ENCODE measurements at regions of chr2 and their contacts with region 1.

Region 1: GRCh38 chr2:9333591-9334171 is 89.6 kb downstream of the ITGB1BP1 start:
- DNase-seq: peak; percentile 69 to 73
- H3K4me3 ChIP-seq: no peak overlapping the region
- H3K4me3 Mint-ChIP-seq: no peak overlapping the region
- H3K27ac Mint-ChIP-seq: no peak overlapping the region
- H3K4me1 ChIP-seq: no peaks in the 10 kb centered on the region
- H3K4me1 Mint-ChIP-seq: peaks cover 26% of the 10 kb centered on the region
- H3K27me3 ChIP-seq: no peaks in the 10 kb centered on the region
- H3K27me3 Mint-ChIP-seq: no peaks in the 10 kb centered on the region
- CTCF ChIP-seq: peak; percentile 55 to 86

Region 2: GRCh38 chr2:8514796-8515758 is 818.6 kb before region 1 on chr2:
- CTCF ChIA-PET with region 1: no interaction called
- POLR2A ChIA-PET with region 1: no interaction called
- intact Hi-C with region 1: no loop called
- DNase-seq: no peak
- H3K4me3 ChIP-seq: no peak overlapping the region
- H3K4me3 Mint-ChIP-seq: peak overlapping the region; percentile 4
- H3K27ac Mint-ChIP-seq: no peak overlapping the region
- H3K4me1 ChIP-seq: 0 out of 2 replicates have a peak, but pooled peaks cover 3% of the 10 kb centered on the region
- H3K4me1 Mint-ChIP-seq: peaks cover 14% of the 10 kb centered on the region
- H3K27me3 ChIP-seq: no peaks in the 10 kb centered on the region
- H3K27me3 Mint-ChIP-seq: no peaks in the 10 kb centered on the region
- CTCF ChIP-seq: no peak

Region 3: DNA sequence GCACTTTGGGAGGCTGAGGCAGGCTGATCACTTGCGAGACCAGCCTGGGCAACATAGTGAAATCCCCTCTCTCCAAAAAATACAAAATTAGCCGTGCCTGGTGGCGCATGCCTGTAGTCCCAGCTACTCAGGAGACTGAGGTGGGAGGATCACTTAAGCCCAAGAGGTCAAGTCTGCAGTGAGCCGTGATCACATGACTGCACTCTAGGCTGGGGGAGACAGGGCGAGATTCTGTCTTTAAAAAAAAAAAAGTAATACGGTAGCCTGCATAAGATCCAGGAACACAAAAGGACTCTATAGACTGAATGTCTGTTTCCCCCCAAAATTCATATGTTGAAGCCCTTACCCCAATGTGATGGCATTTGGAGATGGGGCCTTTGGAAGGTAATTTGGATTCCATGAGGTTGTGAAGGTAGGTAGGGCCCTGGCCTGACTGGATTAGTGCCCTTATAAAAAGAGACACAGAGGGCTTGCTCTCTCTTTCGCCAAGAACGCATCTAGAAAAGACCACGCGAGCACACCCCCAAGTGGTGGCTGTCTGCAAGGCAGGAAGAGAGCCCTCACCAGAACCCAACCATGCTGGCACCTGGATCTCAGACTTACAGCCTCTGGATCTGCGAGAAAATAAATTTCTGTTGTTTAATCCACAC is 347.2 kb before region 1 on chr2:
- CTCF ChIA-PET with region 1: no interaction called
- POLR2A ChIA-PET with region 1: no interaction called
- intact Hi-C with region 1: no loop called
- DNase-seq: peak in 1 of 2 experiments; percentile 47
- H3K4me3 ChIP-seq: no peak overlapping the region
- H3K4me3 Mint-ChIP-seq: no peak overlapping the region
- H3K27ac Mint-ChIP-seq: no peak overlapping the region
- H3K4me1 ChIP-seq: no peaks in the 10 kb centered on the region
- H3K4me1 Mint-ChIP-seq: no peaks in the 10 kb centered on the region
- H3K27me3 ChIP-seq: no peaks in the 10 kb centered on the region
- H3K27me3 Mint-ChIP-seq: no peaks in the 10 kb centered on the region
- CTCF ChIP-seq: peak; percentile 51 to 52

Region 4: DNA sequence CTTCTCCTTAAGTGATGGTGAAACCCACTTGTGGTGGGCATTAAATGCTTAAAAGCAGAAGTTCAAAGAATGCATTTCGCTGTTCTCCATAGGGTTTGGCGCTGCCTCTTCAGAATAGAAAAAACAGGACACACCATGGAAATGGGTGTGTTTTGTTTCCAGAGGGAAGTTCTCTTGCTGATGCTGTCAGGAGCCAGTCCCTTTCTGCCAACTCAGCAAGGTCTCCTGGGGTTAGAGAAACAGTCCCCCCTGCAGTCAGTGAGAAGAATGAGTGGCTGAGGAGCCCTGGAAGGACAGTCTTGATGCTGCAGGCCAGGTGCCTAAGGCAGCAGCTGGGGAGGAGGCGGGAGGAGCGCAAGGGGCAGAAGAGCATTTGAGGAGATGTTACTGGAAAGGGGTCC is 164.9 kb before region 1 on chr2:
- CTCF ChIA-PET with region 1: interaction called, 6 read pairs
- POLR2A ChIA-PET with region 1: no interaction called
- intact Hi-C with region 1: loop called (anchors 1 kb)
- DNase-seq: peak in 1 of 2 experiments; percentile 18
- H3K4me3 ChIP-seq: no peak overlapping the region
- H3K4me3 Mint-ChIP-seq: peak overlapping the region; percentile 10
- H3K27ac Mint-ChIP-seq: no peak overlapping the region
- H3K4me1 ChIP-seq: peaks cover 55% of the 10 kb centered on the region
- H3K4me1 Mint-ChIP-seq: peaks cover 59% of the 10 kb centered on the region
- H3K27me3 ChIP-seq: no peaks in the 10 kb centered on the region
- H3K27me3 Mint-ChIP-seq: no peaks in the 10 kb centered on the region
- CTCF ChIP-seq: no peak

Region 5: DNA sequence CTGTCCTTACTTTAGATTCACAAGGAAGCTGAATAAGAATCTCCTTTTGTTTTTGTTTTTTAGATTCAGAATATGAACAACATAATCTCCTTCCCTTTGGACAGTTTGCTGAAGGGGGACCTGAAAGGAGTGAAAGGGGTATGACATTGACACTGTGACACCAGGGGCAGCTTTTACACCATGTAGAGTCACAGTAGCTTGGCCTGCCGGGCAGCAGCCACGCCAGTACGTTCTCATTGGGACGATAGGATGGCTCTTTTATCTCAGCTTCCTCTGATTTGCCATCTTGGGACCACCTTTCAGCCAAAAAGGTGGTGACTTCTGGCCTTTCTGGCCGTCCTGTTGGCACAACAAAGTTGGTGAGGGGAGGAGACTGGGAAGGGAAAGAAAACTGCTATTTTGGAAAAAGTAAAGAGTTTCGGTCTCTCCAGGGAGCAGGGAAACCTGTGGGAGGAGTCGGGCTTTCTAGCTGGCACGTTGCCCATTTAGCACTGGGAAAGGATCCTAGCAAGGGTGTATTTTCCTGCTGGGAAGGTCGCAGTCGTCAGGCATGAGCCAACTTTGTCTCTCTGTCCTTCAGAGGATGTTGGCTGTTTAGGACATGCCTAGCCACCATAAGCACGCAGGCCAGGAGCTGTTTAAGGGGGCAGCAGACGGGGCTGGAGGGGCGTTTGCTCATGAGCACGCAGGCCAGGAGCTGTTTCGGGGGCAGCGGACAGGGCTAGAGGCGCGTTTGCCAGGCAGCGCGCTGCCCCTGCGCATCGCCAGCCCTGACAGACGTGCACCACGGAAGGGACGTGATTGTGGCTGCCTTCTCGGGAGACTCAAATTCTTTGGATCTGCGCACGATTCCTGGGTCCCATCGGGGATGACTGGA is 15.0 kb before region 1 on chr2:
- CTCF ChIA-PET with region 1: no interaction called
- POLR2A ChIA-PET with region 1: no interaction called
- intact Hi-C with region 1: no loop called
- DNase-seq: no peak
- H3K4me3 ChIP-seq: no peak overlapping the region
- H3K4me3 Mint-ChIP-seq: no peak overlapping the region
- H3K27ac Mint-ChIP-seq: no peak overlapping the region
- H3K4me1 ChIP-seq: 0 out of 2 replicates have a peak, but pooled peaks cover 3% of the 10 kb centered on the region
- H3K4me1 Mint-ChIP-seq: peaks cover 7% of the 10 kb centered on the region
- H3K27me3 ChIP-seq: no peaks in the 10 kb centered on the region; the same call in 1 of the 2 replicates
- H3K27me3 Mint-ChIP-seq: no peaks in the 10 kb centered on the region
- CTCF ChIP-seq: no peak

Region 6: GRCh38 chr2:9857814-9858729 is 524.4 kb after region 1 on chr2:
- CTCF ChIA-PET with region 1: no interaction called
- POLR2A ChIA-PET with region 1: no interaction called
- intact Hi-C with region 1: no loop called
- DNase-seq: no peak
- H3K4me3 ChIP-seq: no peak overlapping the region
- H3K4me3 Mint-ChIP-seq: no peak overlapping the region
- H3K27ac Mint-ChIP-seq: no peak overlapping the region
- H3K4me1 ChIP-seq: no peaks in the 10 kb centered on the region
- H3K4me1 Mint-ChIP-seq: no peaks in the 10 kb centered on the region
- H3K27me3 ChIP-seq: no peaks in the 10 kb centered on the region
- H3K27me3 Mint-ChIP-seq: no peaks in the 10 kb centered on the region
- CTCF ChIP-seq: no peak

Measured in Caco-2 (cell line).